T-cell (primary cell): ENCODE measurements at regions of chr2 and their contacts with region 1.

Region 1: GRCh38 chr2:157932480-157933159 is 56.5 kb upstream of the ACVR1 start:
- DNase-seq: no peak
- ATAC-seq: no peak
- H3K4me3 ChIP-seq: no peak overlapping the region
- H3K4me3 Mint-ChIP-seq: no peak overlapping the region
- H3K27ac ChIP-seq: no peak overlapping the region
- H3K27ac Mint-ChIP-seq: no peak overlapping the region
- H3K4me1 ChIP-seq: peaks cover 0 to 5% of the 10 kb centered on the region in 2 experiments
- H3K4me1 Mint-ChIP-seq: peaks cover 12 to 17% (median 13%) of the 10 kb centered on the region in 3 donors
- H3K27me3 ChIP-seq: no peaks in the 10 kb centered on the region
- H3K27me3 Mint-ChIP-seq: no peaks in the 10 kb centered on the region

Region 2: GRCh38 chr2:158049129-158049855 is 116.7 kb after region 1 on chr2:
- CTCF ChIA-PET with region 1: no interaction called
- POLR2A ChIA-PET with region 1: interaction called in 1 of 2 experiments, 10 read pairs
- DNase-seq: no peak
- ATAC-seq: no peak
- H3K4me3 ChIP-seq: no peak overlapping the region
- H3K4me3 Mint-ChIP-seq: no peak overlapping the region
- H3K27ac ChIP-seq: no peak overlapping the region
- H3K27ac Mint-ChIP-seq: no peak overlapping the region
- H3K4me1 ChIP-seq: no peaks in the 10 kb centered on the region
- H3K4me1 Mint-ChIP-seq: no peaks in the 10 kb centered on the region
- H3K27me3 ChIP-seq: no peaks in the 10 kb centered on the region
- H3K27me3 Mint-ChIP-seq: peaks cover 10 to 14% of the 10 kb centered on the region in 2 donors